Calu3 (cell line): ENCODE measurements at regions of chr20 and their contacts with region 1.

Region 1: GRCh38 chr20:36862857-36863668 is 12.9 kb upstream of the TLDC2 start:
- DNase-seq: no peak
- H3K4me3 Mint-ChIP-seq: peak overlapping the region; percentile 76
- H3K27ac Mint-ChIP-seq: no peak overlapping the region
- H3K4me1 Mint-ChIP-seq: peaks cover 35% of the 10 kb centered on the region
- H3K27me3 Mint-ChIP-seq: peaks cover 19% of the 10 kb centered on the region
- CTCF ChIP-seq: no peak

Region 2: GRCh38 chr20:36676701-36677421 is 186.2 kb before region 1 on chr20:
- CTCF ChIA-PET with region 1: no interaction called
- intact Hi-C with region 1: no loop called
- DNase-seq: no peak
- H3K4me3 Mint-ChIP-seq: no peak overlapping the region
- H3K27ac Mint-ChIP-seq: no peak overlapping the region
- H3K4me1 Mint-ChIP-seq: no peaks in the 10 kb centered on the region
- H3K27me3 Mint-ChIP-seq: no peaks in the 10 kb centered on the region
- CTCF ChIP-seq: no peak

Region 3: GRCh38 chr20:36835453-36836198 is 27.4 kb before region 1 on chr20:
- CTCF ChIA-PET with region 1: interaction called, 24 read pairs
- intact Hi-C with region 1: no loop called
- DNase-seq: peak; percentile 95
- H3K4me3 Mint-ChIP-seq: peak overlapping the region; percentile 71
- H3K27ac Mint-ChIP-seq: peak overlapping the region; percentile 88
- H3K4me1 Mint-ChIP-seq: peaks cover 16% of the 10 kb centered on the region
- H3K27me3 Mint-ChIP-seq: no peaks in the 10 kb centered on the region
- CTCF ChIP-seq: no peak